ENCODE measurements at regions of chr4 and their contacts with region 1.

Region 1: GRCh38 chr4:110005461-110006056 is 92.9 kb downstream of the EGF start:
- DNase-seq: no peak
- H3K4me3 Mint-ChIP-seq: no peak overlapping the region
- H3K27ac Mint-ChIP-seq: no peak overlapping the region
- H3K4me1 Mint-ChIP-seq: peaks cover 8% of the 10 kb centered on the region
- H3K27me3 Mint-ChIP-seq: no peaks in the 10 kb centered on the region
- CTCF ChIP-seq: peak; percentile 41

Region 2: DNA sequence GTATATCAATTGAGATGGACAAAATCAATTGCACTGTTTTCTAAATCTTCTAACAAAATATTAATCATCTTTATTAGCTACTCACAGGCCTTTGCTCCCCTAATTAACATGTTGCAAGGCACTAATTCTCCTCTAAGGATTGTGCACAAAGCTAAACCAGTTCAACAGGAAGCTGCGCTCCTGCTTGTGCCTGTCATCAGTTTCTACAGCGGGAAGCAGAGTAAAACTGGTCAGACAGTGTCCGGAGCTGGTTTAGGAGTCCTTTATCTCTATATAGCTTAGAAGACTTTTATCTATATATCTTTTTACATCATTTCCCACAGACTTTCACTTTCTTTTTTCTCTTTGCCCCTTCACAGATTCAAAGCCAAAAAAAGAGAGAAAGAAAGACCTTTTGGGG is 113.8 kb after region 1 on chr4:
- CTCF ChIA-PET with region 1: no interaction called
- intact Hi-C with region 1: no loop called
- DNase-seq: peak; percentile 47
- H3K4me3 Mint-ChIP-seq: no peak overlapping the region
- H3K27ac Mint-ChIP-seq: no peak overlapping the region
- H3K4me1 Mint-ChIP-seq: peaks cover 8% of the 10 kb centered on the region
- H3K27me3 Mint-ChIP-seq: no peaks in the 10 kb centered on the region
- CTCF ChIP-seq: no peak

Region 3: DNA sequence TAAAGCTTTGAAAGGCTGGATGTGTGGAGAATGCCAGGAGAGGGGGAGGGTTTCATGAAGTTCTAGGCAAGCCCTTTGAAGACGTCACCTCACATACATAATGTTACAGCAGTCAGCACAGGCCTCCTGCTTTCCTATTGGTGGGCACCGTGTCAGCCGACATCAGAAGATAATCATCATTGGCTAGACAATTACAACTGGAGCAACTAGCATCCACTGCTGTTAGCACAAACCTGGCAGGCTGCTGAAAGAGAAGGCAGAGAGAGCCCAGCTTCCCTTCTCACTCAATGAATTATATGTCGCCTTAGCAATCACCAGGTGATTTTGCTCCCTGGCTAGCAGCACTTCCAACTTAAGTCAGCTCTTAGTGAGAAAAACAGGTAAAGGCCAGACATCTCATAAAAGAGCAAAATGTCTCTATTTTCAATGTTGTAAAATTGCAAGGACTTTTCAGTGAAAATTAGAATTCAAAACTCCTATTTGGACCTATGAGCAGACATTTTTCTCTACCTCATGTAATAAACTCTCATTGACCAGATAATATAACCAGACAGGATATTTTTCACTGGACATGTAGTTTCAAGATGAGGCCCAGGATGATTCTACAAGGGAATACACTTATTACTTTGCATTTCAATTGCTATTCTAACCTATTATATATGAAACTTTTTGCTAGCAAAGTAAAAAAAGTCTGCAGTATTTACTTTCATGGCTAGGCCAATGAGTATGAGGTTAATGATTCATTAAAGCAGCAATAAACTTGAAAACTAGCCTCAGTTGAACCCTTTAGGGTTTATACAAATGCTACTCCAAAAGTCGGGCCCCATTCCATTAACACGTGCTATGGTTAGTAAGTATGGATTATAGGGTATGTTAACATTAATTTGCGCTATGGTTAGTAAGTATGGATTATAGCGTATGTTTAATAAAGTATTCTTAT is 188.5 kb after region 1 on chr4:
- CTCF ChIA-PET with region 1: no interaction called
- intact Hi-C with region 1: loop called (anchors 10 kb)
- DNase-seq: peak; percentile 16
- H3K4me3 Mint-ChIP-seq: no peak overlapping the region
- H3K27ac Mint-ChIP-seq: no peak overlapping the region
- H3K4me1 Mint-ChIP-seq: peaks cover 27% of the 10 kb centered on the region
- H3K27me3 Mint-ChIP-seq: no peaks in the 10 kb centered on the region
- CTCF ChIP-seq: no peak

Region 4: GRCh38 chr4:110344162-110344561 is 338.6 kb after region 1 on chr4:
- CTCF ChIA-PET with region 1: interaction called, 3 read pairs
- intact Hi-C with region 1: loop called (anchors 10 kb)
- DNase-seq: peak; percentile 14
- H3K4me3 Mint-ChIP-seq: no peak overlapping the region
- H3K27ac Mint-ChIP-seq: no peak overlapping the region
- H3K4me1 Mint-ChIP-seq: no peaks in the 10 kb centered on the region
- H3K27me3 Mint-ChIP-seq: no peaks in the 10 kb centered on the region
- CTCF ChIP-seq: no peak